ENCODE measurements at regions of chr6 and their contacts with region 1.

Region 1: GRCh38 chr6:163585932-163586437 is 171.5 kb downstream of the QKI start:
- DNase-seq: no peak
- H3K4me3 ChIP-seq: peak overlapping the region in 4 of 59 donors; percentile 3 to 13 (median 10)
- H3K27ac ChIP-seq: peak overlapping the region in 14 of 59 donors; percentile 21 to 76 (median 37)
- H3K27me3 ChIP-seq: no peaks in the 10 kb centered on the region
- CTCF ChIP-seq: no peak

Region 2: GRCh38 chr6:163243083-163243482 is 342.9 kb before region 1 on chr6:
- intact Hi-C with region 1: no loop called
- DNase-seq: peak; percentile 17 to 96 (median 90)
- H3K4me3 ChIP-seq: no peak overlapping the region
- H3K27ac ChIP-seq: peak overlapping the region; percentile 71 to 100 (median 98)
- H3K27me3 ChIP-seq: no peaks in the 10 kb centered on the region
- CTCF ChIP-seq: peak in 34 of 56 donors; percentile 12 to 53 (median 30)

Region 3: DNA sequence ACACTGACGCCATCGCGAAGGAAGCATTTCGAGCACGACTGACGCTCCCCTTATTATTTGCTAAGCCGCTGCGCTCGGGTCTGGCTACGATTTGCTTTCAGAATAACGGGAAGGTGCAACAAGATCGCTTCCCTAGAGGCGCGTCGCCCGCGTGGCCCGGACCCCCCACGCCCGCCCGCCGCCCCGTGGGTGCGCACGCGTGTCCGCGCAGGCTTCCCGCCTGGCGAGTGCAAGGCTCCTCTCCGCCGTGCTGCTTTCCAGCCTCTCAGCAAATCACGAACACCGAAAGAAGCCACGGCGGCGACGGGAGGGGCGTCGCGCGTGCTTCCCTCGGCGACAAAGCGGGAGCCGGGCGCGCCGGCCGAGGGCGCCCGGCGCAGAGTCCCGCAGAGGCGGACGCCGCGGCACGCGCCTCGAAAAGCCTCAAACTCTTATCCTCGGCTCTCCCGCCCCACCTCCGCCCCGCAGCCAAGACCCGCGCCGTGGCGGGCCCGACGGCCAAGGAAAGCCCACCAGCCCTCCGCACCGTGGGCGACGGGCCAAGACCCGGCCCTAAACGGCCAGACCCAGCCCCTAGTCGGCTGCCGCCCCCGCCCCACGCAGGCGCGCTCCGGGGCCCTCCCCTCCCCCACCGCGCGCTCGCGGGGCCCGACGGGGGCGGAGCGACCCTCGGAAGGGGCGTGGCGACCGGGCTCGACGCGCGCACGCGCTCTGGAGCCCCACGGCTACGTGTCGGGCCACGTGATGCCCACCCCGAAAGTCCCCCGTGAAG is 172.5 kb before region 1 on chr6:
- intact Hi-C with region 1: no loop called
- DNase-seq: peak; percentile 78 to 90 (median 83)
- H3K4me3 ChIP-seq: peak overlapping the region; percentile 54 to 97 (median 79)
- H3K27ac ChIP-seq: peak overlapping the region; percentile 91 to 100 (median 99)
- H3K27me3 ChIP-seq: no peaks in the 10 kb centered on the region
- CTCF ChIP-seq: peak in 29 of 56 donors; percentile 7 to 49 (median 23)

Region 4: DNA sequence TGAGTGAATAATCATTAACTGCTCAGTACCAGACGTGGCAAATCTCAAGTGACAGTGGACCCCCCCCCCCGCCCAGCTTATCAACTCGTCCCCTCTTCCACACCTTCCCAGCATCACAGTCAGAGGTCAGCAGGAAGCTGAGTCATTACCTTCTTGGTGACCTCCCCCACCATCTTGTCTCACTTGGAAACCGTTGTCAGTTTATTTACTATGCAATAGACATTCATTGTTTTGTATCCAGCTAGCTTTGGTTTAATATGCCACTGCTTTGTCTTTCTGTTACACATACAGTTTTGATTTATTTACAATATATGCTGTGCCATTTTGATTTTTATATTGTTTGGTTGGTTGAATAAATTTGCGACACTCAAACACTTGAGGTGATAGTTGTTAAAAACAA is 13.4 kb before region 1 on chr6:
- intact Hi-C with region 1: no loop called
- DNase-seq: no peak
- H3K4me3 ChIP-seq: peak overlapping the region in 1 of 59 donors; percentile 2
- H3K27ac ChIP-seq: peak overlapping the region in 25 of 59 donors; percentile 5 to 84 (median 45)
- H3K27me3 ChIP-seq: no peaks in the 10 kb centered on the region
- CTCF ChIP-seq: no peak

Region 5: DNA sequence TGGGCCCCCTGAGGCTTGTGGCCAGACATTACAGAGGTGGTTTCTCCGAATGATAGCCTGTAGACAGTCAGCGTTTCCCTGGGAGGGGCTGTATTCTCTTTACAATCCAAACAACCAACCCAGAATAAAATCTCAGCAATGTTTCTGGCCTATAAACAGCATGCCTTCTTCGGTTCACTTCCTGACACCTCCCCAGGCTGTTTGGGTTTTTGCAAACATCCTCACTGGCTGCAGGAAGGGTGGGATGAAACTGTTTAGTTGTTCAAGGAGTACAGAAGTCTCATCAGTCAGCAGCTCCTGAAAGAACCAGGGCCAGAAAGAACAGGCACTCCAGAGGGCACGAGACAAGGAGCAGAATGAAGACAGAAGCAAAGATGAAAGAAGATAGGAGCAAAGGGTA is 178.6 kb after region 1 on chr6:
- intact Hi-C with region 1: no loop called
- DNase-seq: no peak
- H3K4me3 ChIP-seq: no peak overlapping the region
- H3K27ac ChIP-seq: peak overlapping the region in 3 of 59 donors; percentile 16 to 32 (median 26)
- H3K27me3 ChIP-seq: peaks cover 0 to 3% (median 0%) of the 10 kb centered on the region in 45 donors
- CTCF ChIP-seq: no peak

Region 6: GRCh38 chr6:163943607-163944385 is 357.8 kb after region 1 on chr6:
- intact Hi-C with region 1: loop called in 1 of 2 experiments (anchors 10 kb)
- DNase-seq: peak; percentile 27 to 79 (median 73)
- H3K4me3 ChIP-seq: peak overlapping the region; percentile 1 to 66 (median 47)
- H3K27ac ChIP-seq: peak overlapping the region in 58 of 59 donors; percentile 1 to 93 (median 79)
- H3K27me3 ChIP-seq: no peaks in the 10 kb centered on the region
- CTCF ChIP-seq: no peak

Region 7: DNA sequence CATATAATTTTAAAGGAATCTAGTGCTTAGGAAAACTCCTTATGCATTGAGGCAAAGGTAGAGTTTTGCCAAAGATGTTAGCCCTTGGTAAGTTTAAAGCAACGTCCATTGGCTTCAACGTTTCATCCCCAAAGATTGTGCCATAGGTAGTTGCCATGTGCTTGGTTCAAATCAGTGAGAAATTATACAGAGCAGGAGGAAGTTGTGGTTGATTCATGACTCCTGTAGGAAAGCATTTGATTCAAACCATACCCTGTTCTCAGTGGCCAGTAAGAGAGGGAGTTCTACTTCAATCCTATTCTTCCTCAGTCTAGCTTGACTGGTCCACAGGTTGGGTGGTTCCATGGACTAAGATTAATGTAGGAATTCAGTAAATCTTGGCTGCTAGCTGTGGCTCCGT is 364.2 kb after region 1 on chr6:
- intact Hi-C with region 1: loop called (anchors 5 to 10 kb)
- DNase-seq: no peak
- H3K4me3 ChIP-seq: no peak overlapping the region
- H3K27ac ChIP-seq: peak overlapping the region in 10 of 59 donors; percentile 3 to 91 (median 49)
- H3K27me3 ChIP-seq: no peaks in the 10 kb centered on the region
- CTCF ChIP-seq: no peak

Region 8: GRCh38 chr6:164085091-164086075 is 499.4 kb after region 1 on chr6:
- intact Hi-C with region 1: loop called (anchors 5 to 10 kb)
- DNase-seq: peak; percentile 21 to 95 (median 93)
- H3K4me3 ChIP-seq: peak overlapping the region in 57 of 59 donors; percentile 7 to 64 (median 44)
- H3K27ac ChIP-seq: peak overlapping the region in 58 of 59 donors; percentile 1 to 90 (median 76)
- H3K27me3 ChIP-seq: peaks cover 0 to 5% (median 0%) of the 10 kb centered on the region in 45 donors
- CTCF ChIP-seq: peak in 16 of 56 donors; percentile 7 to 36 (median 20)

Region 9: GRCh38 chr6:164927288-164928056 is 1341.5 kb after region 1 on chr6:
- intact Hi-C with region 1: loop called in 1 of 2 experiments (anchors 10 kb)
- DNase-seq: peak; percentile 78 to 91 (median 86)
- H3K4me3 ChIP-seq: peak overlapping the region; percentile 39 to 80 (median 60)
- H3K27ac ChIP-seq: peak overlapping the region in 58 of 59 donors; percentile 11 to 92 (median 78)
- H3K27me3 ChIP-seq: no peaks in the 10 kb centered on the region
- CTCF ChIP-seq: peak; percentile 89 to 99 (median 98)

Measured in dorsolateral prefrontal cortex (tissue), 120 donors.